Naive thymus-derived CD4-positive, alpha-beta T cell (primary cell): ENCODE measurements at regions of chr7 and their contacts with region 1.

Region 1: GRCh38 chr7:120857588-120858573 is at the start of gene TSPAN12:
- DNase-seq: peak in 7 of 9 donors; percentile 11 to 64 (median 28)
- ATAC-seq: peak; percentile 89
- H3K4me3 ChIP-seq: peak within 1 kb of the TSS; percentile 52
- H3K4me3 Mint-ChIP-seq: peak within 1 kb of the TSS; percentile 82 to 90 (median 86)
- H3K27ac ChIP-seq: no peak within 1 kb of the TSS
- H3K27ac Mint-ChIP-seq: no peak within 1 kb of the TSS
- H3K4me1 ChIP-seq: peaks cover 0 to 8% of the 10 kb centered on the region in 2 donors
- H3K4me1 Mint-ChIP-seq: peaks cover 10 to 13% (median 12%) of the 10 kb centered on the region in 7 donors
- H3K27me3 ChIP-seq: peaks cover 13 to 15% of the 10 kb centered on the region in 2 donors
- H3K27me3 Mint-ChIP-seq: peaks cover 51 to 71% (median 66%) of the 10 kb centered on the region in 5 donors
- total RNA-seq, gene TSPAN12: not detected

Region 2: GRCh38 chr7:120941064-120941463 is 83.2 kb after region 1 on chr7:
- CTCF ChIA-PET with region 1: no interaction called
- POLR2A ChIA-PET with region 1: no interaction called
- intact Hi-C with region 1: loop called in 1 of 2 experiments (anchors 10 kb)
- DNase-seq: no peak
- ATAC-seq: peak; percentile 47
- H3K4me3 ChIP-seq: no peak overlapping the region
- H3K4me3 Mint-ChIP-seq: no peak overlapping the region
- H3K27ac ChIP-seq: no peak overlapping the region
- H3K27ac Mint-ChIP-seq: no peak overlapping the region
- H3K4me1 ChIP-seq: no peaks in the 10 kb centered on the region
- H3K4me1 Mint-ChIP-seq: no peaks in the 10 kb centered on the region
- H3K27me3 ChIP-seq: no peaks in the 10 kb centered on the region
- H3K27me3 Mint-ChIP-seq: peaks cover under 1 to 28% (median 9%) of the 10 kb centered on the region in 5 donors